CD8-positive, alpha-beta T cell (primary cell): ENCODE measurements at regions of chr11 and their contacts with region 1.

Region 1: GRCh38 chr11:74449369-74449931 is 17.9 kb downstream of the KCNE3 start:
- DNase-seq: peak in 8 of 9 experiments; percentile 3 to 80 (median 40)
- ATAC-seq: peak; percentile 89
- H3K4me3 ChIP-seq: no peak overlapping the region
- H3K4me3 Mint-ChIP-seq: no peak overlapping the region
- H3K27ac ChIP-seq: no peak overlapping the region
- H3K27ac Mint-ChIP-seq: no peak overlapping the region
- H3K4me1 ChIP-seq: no peaks in the 10 kb centered on the region
- H3K4me1 Mint-ChIP-seq: peaks cover 5% of the 10 kb centered on the region
- H3K27me3 ChIP-seq: no peaks in the 10 kb centered on the region
- H3K27me3 Mint-ChIP-seq: peaks cover 14% of the 10 kb centered on the region
- CTCF ChIP-seq: peak; percentile 68

Region 2: GRCh38 chr11:74255741-74256369 is 193.6 kb before region 1 on chr11:
- CTCF ChIA-PET with region 1: interaction called, 56 read pairs
- POLR2A ChIA-PET with region 1: no interaction called
- intact Hi-C with region 1: loop called in 1 of 2 experiments (anchors 1 kb)
- DNase-seq: peak; percentile 25 to 74 (median 53)
- ATAC-seq: peak; percentile 73
- H3K4me3 ChIP-seq: no peak overlapping the region
- H3K4me3 Mint-ChIP-seq: no peak overlapping the region
- H3K27ac ChIP-seq: no peak overlapping the region
- H3K27ac Mint-ChIP-seq: peak overlapping the region; percentile 19
- H3K4me1 ChIP-seq: no peaks in the 10 kb centered on the region
- H3K4me1 Mint-ChIP-seq: peaks cover 5% of the 10 kb centered on the region
- H3K27me3 ChIP-seq: no peaks in the 10 kb centered on the region
- H3K27me3 Mint-ChIP-seq: no peaks in the 10 kb centered on the region
- CTCF ChIP-seq: peak; percentile 75

Region 3: DNA sequence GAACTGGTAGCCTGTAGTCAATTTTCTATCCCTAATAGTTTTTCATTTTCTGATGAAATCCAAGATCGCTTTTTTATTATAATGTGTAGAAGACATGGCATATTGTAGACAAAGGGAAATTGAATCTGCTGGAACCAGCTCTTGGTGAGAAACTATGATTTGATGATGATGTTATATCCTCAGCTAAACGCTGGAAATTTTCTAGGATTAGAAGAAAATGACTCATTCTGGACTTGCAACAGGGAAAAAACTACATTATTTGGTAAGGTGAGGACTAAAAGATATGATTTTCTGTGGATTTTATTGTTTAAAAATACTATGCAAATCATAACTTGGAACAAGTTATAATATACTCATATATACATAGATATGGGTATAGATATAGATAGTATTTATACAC is 37.1 kb before region 1 on chr11:
- CTCF ChIA-PET with region 1: interaction called, 11 read pairs
- POLR2A ChIA-PET with region 1: no interaction called
- intact Hi-C with region 1: no loop called
- DNase-seq: no peak
- ATAC-seq: no peak
- H3K4me3 ChIP-seq: no peak overlapping the region
- H3K4me3 Mint-ChIP-seq: no peak overlapping the region
- H3K27ac ChIP-seq: no peak overlapping the region
- H3K27ac Mint-ChIP-seq: no peak overlapping the region
- H3K4me1 ChIP-seq: peaks cover 2% of the 10 kb centered on the region
- H3K4me1 Mint-ChIP-seq: peaks cover 8% of the 10 kb centered on the region
- H3K27me3 ChIP-seq: no peaks in the 10 kb centered on the region
- H3K27me3 Mint-ChIP-seq: peaks cover 3% of the 10 kb centered on the region
- CTCF ChIP-seq: no peak

Region 4: GRCh38 chr11:74434528-74434927 is 14.9 kb before region 1 on chr11:
- CTCF ChIA-PET with region 1: interaction called, 15 read pairs
- POLR2A ChIA-PET with region 1: interaction called, 3 read pairs
- intact Hi-C with region 1: no loop called
- DNase-seq: no peak
- ATAC-seq: no peak
- H3K4me3 ChIP-seq: no peak overlapping the region
- H3K4me3 Mint-ChIP-seq: no peak overlapping the region
- H3K27ac ChIP-seq: no peak overlapping the region
- H3K27ac Mint-ChIP-seq: no peak overlapping the region
- H3K4me1 ChIP-seq: no peaks in the 10 kb centered on the region
- H3K4me1 Mint-ChIP-seq: no peaks in the 10 kb centered on the region
- H3K27me3 ChIP-seq: no peaks in the 10 kb centered on the region
- H3K27me3 Mint-ChIP-seq: peaks cover 5% of the 10 kb centered on the region
- CTCF ChIP-seq: no peak

Region 5: DNA sequence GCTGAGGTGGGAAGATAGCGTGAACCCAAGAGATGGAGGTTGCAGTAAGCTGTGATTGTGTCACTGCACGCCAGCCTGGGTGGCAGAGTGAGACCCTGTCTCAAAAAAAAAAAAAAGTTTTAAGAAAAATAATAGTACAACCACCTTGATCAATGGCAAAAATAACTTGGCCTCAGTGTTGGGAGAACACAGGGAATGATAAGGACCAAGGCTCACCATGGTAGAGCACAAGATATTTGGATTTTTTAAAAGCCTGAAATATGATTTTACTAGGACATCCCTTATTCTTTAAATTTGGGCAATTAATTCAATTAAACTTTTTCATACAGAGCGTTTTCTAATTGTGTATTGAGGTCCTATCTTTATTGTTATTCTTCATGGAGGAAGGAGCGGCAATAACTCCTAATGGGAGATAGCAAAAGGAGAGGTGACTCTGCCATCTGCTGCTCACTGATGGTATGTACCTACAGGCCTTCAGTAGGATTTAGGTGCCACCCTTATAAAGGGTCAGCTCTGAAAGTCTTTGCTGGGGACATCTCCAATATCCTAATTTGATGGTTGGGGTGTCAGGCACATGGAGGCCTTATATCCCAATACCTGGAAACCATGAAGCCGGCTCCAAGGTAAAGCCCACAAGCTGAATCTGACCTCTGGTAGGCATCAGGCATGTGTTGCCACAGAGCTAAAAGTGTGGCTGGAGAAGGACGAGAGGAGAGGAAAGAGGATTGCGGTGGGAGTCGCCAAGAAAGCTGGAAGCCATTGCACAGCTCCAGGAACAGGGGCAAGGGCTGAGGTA is 121.0 kb after region 1 on chr11:
- CTCF ChIA-PET with region 1: interaction called, 52 read pairs
- POLR2A ChIA-PET with region 1: no interaction called
- intact Hi-C with region 1: loop called in 1 of 2 experiments (anchors 2 kb)
- DNase-seq: peak in 4 of 9 experiments; percentile 7 to 49 (median 23)
- ATAC-seq: no peak
- H3K4me3 ChIP-seq: no peak overlapping the region
- H3K4me3 Mint-ChIP-seq: no peak overlapping the region
- H3K27ac ChIP-seq: no peak overlapping the region
- H3K27ac Mint-ChIP-seq: no peak overlapping the region
- H3K4me1 ChIP-seq: no peaks in the 10 kb centered on the region
- H3K4me1 Mint-ChIP-seq: no peaks in the 10 kb centered on the region
- H3K27me3 ChIP-seq: no peaks in the 10 kb centered on the region
- H3K27me3 Mint-ChIP-seq: peaks cover 7% of the 10 kb centered on the region
- CTCF ChIP-seq: peak; percentile 45